ENCODE measurements at regions of chr16 and their contacts with region 1.

Region 1: GRCh38 chr16:180938-181667 is 844 bp downstream of the HBQ1 start:
- DNase-seq: no peak
- H3K4me3 ChIP-seq: peak overlapping the region; percentile 27 to 50 (median 36)
- H3K27ac ChIP-seq: no peak overlapping the region
- H3K4me1 ChIP-seq: peaks cover 19 to 28% (median 28%) of the 10 kb centered on the region in 4 donors
- H3K27me3 ChIP-seq: peaks cover 0 to 46% (median 39%) of the 10 kb centered on the region in 4 donors
- CTCF ChIP-seq: peak; percentile 90 to 100 (median 91)
- EP300 ChIP-seq: no peak
- POLR2A ChIP-seq: no peak

Region 2: DNA sequence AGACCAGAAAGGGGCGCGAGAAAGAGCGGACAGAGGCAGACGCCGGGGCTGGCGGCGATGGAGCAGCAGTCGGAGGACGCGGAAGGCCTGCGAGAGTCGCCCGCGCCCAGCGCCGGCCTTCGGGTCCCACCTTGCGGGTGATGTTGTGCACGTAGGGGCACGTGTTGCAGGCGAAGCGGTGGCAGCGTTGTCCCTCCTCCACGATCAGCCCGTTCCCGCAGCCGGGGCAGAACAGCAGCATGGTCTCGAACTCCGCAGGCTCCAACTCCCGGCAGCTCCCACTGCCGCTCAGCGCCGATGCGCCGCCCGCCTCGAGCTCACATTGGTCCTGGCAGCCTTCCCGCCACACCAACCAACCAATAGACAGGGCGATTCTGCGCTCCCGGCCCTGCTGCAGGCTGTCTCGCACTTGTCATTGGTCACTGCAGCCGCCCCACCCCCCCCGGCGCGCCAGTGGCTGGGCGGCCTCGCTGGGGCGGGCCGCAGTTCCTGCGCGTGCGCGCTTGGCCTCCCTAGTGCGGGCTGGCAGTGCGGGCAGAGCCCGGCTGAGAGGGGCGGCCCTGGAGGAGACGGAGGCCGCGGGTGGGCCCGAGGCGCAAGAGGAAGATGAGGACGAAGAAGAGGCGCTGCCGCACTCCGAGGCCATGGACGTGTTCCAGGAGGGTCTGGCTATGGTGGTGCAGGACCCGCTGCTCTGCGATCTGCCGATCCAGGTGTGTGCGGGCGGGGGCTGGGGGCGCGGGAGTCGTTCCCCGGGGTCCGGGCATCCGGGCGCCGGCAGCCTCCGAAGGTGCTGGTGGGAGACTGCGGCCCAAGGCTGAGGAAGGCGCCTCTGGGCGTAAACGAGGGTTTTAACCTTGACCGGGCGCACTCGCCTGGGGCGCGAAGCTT is 127.5 kb before region 1 on chr16 and contains the starts of genes POLR3K and SNRNP25:
- intact Hi-C with region 1: no loop called
- DNase-seq: peak; percentile 99
- H3K4me3 ChIP-seq: peak within 1 kb of the TSS; percentile 71 to 97 (median 87)
- H3K27ac ChIP-seq: peak within 1 kb of the TSS; percentile 76 to 90 (median 84)
- H3K4me1 ChIP-seq: peaks cover 7 to 45% (median 30%) of the 10 kb centered on the region in 4 donors
- H3K27me3 ChIP-seq: no peaks in the 10 kb centered on the region
- CTCF ChIP-seq: no peak
- EP300 ChIP-seq: no peak
- POLR2A ChIP-seq: peak; percentile 10
- total RNA-seq, gene POLR3K: 3.3 to 3.8 (median 3.7) TPM
- total RNA-seq, gene SNRNP25: 22.0 to 33.6 (median 25.7) TPM

Region 3: DNA sequence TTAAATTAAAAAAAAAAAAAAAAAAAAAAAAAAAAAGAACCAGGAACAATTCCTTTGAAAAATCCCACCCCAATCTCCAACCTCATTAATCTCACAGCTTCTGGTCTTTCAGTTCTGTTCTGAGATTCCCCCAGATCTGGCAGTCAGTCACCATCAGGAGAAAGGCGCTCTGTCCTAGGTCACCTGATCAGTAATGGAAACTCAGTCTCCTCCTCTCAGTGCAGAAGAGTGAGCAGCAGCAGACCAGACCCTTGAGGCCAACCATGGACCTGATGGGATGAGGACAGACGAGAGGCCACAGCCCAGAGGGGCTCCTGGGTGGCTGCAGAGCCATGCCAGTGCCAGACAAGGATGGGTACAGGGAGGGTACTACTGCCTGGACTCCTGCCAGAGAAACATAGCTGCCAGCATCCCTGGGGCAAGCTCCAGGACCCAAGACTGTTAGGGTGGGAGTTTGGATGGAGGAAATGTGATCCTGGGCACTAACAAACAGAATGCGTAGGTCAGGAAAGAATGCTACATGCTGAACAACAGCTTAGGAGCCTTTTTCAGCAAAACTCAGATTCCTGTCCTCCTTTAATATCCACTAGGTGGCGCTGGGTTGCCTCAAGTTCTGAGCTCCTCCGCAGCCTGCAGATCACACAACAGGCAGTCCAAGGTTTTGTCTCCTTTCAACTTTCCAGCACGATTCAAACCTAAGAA is 74.3 kb before region 1 on chr16:
- intact Hi-C with region 1: loop called (anchors 2 kb)
- DNase-seq: no peak
- H3K4me3 ChIP-seq: no peak overlapping the region
- H3K27ac ChIP-seq: no peak overlapping the region
- H3K4me1 ChIP-seq: peaks cover 9 to 20% (median 18%) of the 10 kb centered on the region in 4 donors
- H3K27me3 ChIP-seq: no peaks in the 10 kb centered on the region
- CTCF ChIP-seq: peak; percentile 67 to 83 (median 77)
- EP300 ChIP-seq: no peak
- POLR2A ChIP-seq: no peak

Region 4: GRCh38 chr16:361872-362701 is 181.0 kb after region 1 on chr16:
- intact Hi-C with region 1: no loop called
- DNase-seq: no peak
- H3K4me3 ChIP-seq: no peak overlapping the region
- H3K27ac ChIP-seq: no peak overlapping the region
- H3K4me1 ChIP-seq: peaks cover 0 to 9% (median 4%) of the 10 kb centered on the region in 4 donors
- H3K27me3 ChIP-seq: peaks cover 0 to 38% (median 0%) of the 10 kb centered on the region in 4 donors
- CTCF ChIP-seq: peak; percentile 52 to 77 (median 68)
- EP300 ChIP-seq: no peak
- POLR2A ChIP-seq: no peak

Measured in esophagus muscularis mucosa (tissue), 4 donors.